ENCODE measurements at regions of chr19 and their contacts with region 1.

Region 1: GRCh38 chr19:55216461-55217198 is 7.3 kb upstream of the PTPRH start:
- DNase-seq: peak; percentile 99
- H3K4me3 Mint-ChIP-seq: peak overlapping the region; percentile 78
- H3K27ac Mint-ChIP-seq: peak overlapping the region; percentile 64
- H3K4me1 Mint-ChIP-seq: peaks cover 16% of the 10 kb centered on the region
- H3K27me3 Mint-ChIP-seq: no peaks in the 10 kb centered on the region
- CTCF ChIP-seq: no peak

Region 2: DNA sequence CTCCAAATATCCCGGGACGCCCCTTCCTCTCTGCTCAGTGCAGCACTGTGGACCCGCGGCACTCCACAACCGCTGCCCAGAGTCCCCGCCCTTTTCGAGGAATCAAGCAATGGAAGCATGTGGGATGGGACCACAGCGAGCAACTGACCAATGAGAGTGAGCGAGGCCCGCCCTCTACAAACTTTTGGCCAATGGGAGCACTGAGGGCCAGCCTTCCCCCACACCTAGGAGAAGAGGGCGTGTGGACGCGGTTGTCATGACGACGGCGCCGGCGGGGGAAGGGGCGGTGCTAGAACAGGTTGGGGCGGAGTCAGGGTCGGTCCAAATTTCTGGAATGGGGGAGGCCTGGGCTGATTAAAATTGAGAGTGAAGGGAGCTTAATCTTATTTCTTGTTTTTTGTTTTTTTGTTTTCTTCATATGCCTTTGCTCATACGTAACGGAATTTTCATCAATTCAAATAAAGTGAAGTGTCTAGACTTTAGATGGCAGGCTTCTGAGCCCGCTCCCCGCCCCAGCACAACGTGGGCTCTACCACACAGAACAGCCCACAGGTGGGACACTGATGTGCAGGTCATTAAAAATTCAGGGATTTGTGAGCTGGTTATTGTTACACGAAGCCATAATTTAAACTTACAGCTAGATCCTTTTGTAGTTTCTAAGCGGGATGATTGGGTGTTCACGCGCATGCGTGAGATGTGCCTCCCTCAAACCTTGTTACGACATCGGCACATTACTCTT is 49.9 kb before region 1 on chr19 and contains the start of gene DNAAF3:
- CTCF ChIA-PET with region 1: no interaction called
- POLR2A ChIA-PET with region 1: interaction called, 9 read pairs
- intact Hi-C with region 1: loop called (anchors 1 kb)
- DNase-seq: peak; percentile 100
- H3K4me3 Mint-ChIP-seq: peak within 1 kb of the TSS; percentile 84
- H3K27ac Mint-ChIP-seq: peak within 1 kb of the TSS; percentile 93
- H3K4me1 Mint-ChIP-seq: peaks cover 10% of the 10 kb centered on the region
- H3K27me3 Mint-ChIP-seq: no peaks in the 10 kb centered on the region
- CTCF ChIP-seq: no peak
- total RNA-seq, gene DNAAF3: 3.9 and 4.9 TPM in 2 replicates

Region 3: GRCh38 chr19:55189424-55189823 is 27.2 kb before region 1 on chr19:
- CTCF ChIA-PET with region 1: interaction called, 3 read pairs
- POLR2A ChIA-PET with region 1: interaction called, 21 read pairs
- intact Hi-C with region 1: loop called (anchors 1 kb)
- DNase-seq: peak; percentile 100
- H3K4me3 Mint-ChIP-seq: peak overlapping the region; percentile 64
- H3K27ac Mint-ChIP-seq: peak overlapping the region; percentile 99
- H3K4me1 Mint-ChIP-seq: peaks cover 14% of the 10 kb centered on the region
- H3K27me3 Mint-ChIP-seq: no peaks in the 10 kb centered on the region
- CTCF ChIP-seq: no peak

Region 4: GRCh38 chr19:55197531-55197930 is 19.1 kb before region 1 on chr19:
- CTCF ChIA-PET with region 1: interaction called, 3 read pairs
- POLR2A ChIA-PET with region 1: interaction called, 16 read pairs
- intact Hi-C with region 1: no loop called
- DNase-seq: no peak
- H3K4me3 Mint-ChIP-seq: no peak overlapping the region
- H3K27ac Mint-ChIP-seq: no peak overlapping the region
- H3K4me1 Mint-ChIP-seq: no peaks in the 10 kb centered on the region
- H3K27me3 Mint-ChIP-seq: no peaks in the 10 kb centered on the region
- CTCF ChIP-seq: no peak